ENCODE measurements at regions of chr7 and their contacts with region 1.

Region 1: GRCh38 chr7:151932358-151932876 is 23.8 kb upstream of the GALNTL5 start:
- DNase-seq: no peak

Region 2: DNA sequence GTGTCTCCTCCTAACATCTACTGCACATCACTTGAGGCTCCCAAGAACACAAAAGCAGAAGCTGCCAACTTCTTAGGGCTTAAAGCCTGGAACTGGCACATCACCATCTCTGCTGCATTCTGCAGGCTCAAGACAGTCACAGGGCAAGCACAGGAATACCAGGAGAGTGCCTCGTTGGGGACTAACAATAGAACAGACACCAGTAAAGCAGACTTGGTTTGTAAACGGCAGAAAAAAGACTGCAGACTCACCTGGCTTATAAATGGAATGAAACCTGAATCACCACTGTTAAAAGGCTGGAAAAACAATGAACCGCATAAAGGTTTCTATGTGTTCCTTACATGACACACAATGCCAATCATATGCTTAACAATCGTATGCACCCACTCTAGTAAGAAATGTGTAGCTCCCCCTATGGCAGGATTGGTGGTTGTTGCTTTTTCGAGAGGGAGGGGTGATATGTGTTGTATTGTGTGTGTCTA is 425.5 kb before region 1 on chr7:
- intact Hi-C with region 1: no loop called
- DNase-seq: peak in 2 of 10 donors; percentile 62 to 84

Region 3: GRCh38 chr7:151782598-151783448 is 149.6 kb before region 1 on chr7:
- intact Hi-C with region 1: loop called (anchors 2 kb)
- DNase-seq: peak; percentile 40 to 95 (median 65)

Region 4: DNA sequence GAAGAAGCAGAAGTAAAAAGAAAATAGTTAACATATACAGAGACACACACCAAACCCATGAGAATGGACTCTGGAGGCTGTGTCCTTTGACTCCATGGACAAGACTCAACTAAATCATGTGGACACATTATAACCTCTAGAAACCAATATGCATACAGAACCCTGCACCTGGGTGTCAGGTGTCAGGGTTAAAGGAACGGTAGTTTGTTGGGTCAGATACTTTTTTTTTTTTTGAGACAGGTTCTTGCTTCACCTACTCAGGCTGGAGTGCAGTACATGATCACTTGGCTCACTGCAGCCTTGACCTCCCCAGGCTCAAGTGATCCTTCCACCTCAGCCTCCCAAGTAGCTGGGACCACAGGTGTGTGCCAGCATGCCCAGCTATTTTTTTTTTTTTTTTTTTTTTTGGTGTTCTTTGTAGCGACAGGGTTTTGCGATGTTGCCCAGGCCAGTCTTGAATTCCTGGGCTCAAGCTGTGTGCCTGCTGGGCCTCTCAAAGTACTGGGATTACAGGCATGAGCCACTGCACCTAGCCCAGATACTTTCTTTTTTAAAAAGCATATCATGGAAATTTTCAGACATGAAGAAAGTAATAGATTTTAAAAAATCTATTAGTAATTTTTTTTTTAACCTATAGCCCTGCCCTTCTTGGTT is 124.3 kb after region 1 on chr7:
- intact Hi-C with region 1: no loop called
- DNase-seq: no peak